ENCODE measurements at regions of chr14 and their contacts with region 1.

Region 1: GRCh38 chr14:23095196-23096108 is at the start of gene C14orf119:
- DNase-seq: peak; percentile 100
- ATAC-seq: peak; percentile 91
- H3K4me3 Mint-ChIP-seq: no peak within 1 kb of the TSS
- H3K27ac Mint-ChIP-seq: no peak within 1 kb of the TSS
- H3K4me1 Mint-ChIP-seq: peaks cover 34% of the 10 kb centered on the region
- H3K27me3 Mint-ChIP-seq: no peaks in the 10 kb centered on the region
- CTCF ChIP-seq: no peak
- total RNA-seq, gene C14orf119: 49.2 to 51.1 TPM

Region 2: DNA sequence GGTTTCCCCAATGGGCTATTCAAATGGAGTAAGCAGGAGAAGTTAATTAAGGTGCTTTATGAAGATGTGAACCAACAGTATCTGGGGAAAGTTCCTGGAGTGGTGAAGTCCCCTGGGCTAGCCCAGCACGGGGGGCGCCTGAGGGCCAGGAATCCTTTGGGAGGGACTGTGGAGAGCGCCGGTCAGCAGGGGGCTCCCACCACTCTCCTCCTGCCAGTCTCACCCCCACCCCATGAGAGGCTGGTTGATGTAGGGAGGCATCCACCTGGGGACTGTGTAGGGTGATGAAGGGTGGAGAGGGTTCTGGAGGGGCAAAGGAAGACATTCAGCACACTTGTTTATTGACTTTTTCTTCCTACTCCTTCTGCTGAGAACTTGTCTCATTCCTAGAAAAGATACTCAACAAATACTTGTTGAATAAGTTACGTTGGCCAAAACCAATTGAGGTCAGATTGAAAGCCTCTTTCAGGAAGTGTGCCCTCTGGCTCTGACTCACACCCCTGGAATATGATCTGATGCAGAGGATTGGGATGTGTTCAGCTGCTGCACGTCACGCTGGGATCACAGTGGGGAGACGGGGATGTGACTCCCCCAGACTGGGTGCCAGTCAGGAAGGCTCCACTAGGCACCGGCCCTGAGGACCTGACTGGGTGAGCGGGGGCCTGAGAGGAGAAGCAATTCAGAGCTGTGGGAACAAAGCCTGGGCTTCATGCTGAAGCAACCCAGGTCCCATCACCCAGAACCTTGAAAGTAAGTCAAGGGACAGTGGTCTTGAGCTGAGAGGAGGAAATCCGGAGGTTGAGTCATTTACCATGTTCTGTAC is 19.4 kb after region 1 on chr14:
- CTCF ChIA-PET with region 1: interaction called, 32 read pairs
- POLR2A ChIA-PET with region 1: interaction called, 9 read pairs
- intact Hi-C with region 1: no loop called
- DNase-seq: no peak
- ATAC-seq: no peak
- H3K4me3 Mint-ChIP-seq: no peak overlapping the region
- H3K27ac Mint-ChIP-seq: no peak overlapping the region
- H3K4me1 Mint-ChIP-seq: peaks cover 30% of the 10 kb centered on the region
- H3K27me3 Mint-ChIP-seq: no peaks in the 10 kb centered on the region
- CTCF ChIP-seq: no peak

Measured in activated CD8-positive, alpha-beta T cell treated with anti-CD3 and anti-CD28 coated beads for 36 hours (primary cell).